ENCODE measurements at regions of chr2 and their contacts with region 1.

Region 1: DNA sequence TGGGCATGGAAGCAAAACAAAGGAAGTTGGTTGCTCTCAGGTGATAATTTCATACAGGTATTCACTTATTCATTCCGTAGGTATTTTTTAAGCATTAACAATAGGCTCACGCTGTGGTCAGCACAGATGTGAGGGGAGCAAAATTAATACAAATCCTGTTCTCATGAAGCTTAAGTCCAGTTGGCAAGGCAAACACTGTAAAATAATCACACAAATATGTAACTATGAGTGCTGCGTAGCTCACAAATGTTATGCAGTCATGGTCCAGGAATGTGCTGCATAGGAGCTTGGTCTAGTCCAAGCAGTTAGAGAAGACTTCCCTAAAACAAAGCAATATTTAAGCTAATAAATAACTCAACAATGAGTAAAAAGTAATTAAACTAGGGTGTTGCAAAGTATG is 23.9 kb downstream of the SP5 start:
- DNase-seq: no peak
- ATAC-seq: no peak
- H3K4me3 ChIP-seq: no peak overlapping the region
- H3K4me3 Mint-ChIP-seq: no peak overlapping the region
- H3K27ac ChIP-seq: no peak overlapping the region
- H3K27ac Mint-ChIP-seq: no peak overlapping the region
- H3K4me1 ChIP-seq: no peaks in the 10 kb centered on the region
- H3K4me1 Mint-ChIP-seq: no peaks in the 10 kb centered on the region
- H3K27me3 ChIP-seq: peaks cover 5 to 10% of the 10 kb centered on the region in 2 experiments
- H3K27me3 Mint-ChIP-seq: peaks cover 13% of the 10 kb centered on the region
- CTCF ChIP-seq: no peak

Region 2: DNA sequence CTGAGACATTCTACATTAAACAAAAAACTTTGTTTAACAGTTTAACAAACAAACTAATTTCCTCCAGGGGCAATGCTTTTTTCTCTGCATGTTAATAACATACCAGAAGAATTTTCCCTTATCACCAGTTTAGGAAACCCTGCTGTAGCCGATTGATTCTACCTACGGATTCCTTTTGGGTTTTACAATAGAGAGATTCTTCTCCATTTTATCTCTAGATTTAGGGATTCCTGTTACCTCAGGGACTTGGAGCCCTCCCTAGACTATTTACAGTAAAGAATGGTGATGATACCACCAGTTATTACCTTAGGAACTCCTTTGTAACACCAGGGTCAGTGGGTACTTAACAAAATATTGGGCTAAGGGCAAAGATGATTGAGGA is 25.8 kb after region 1 on chr2:
- CTCF ChIA-PET with region 1: no interaction called
- POLR2A ChIA-PET with region 1: no interaction called
- intact Hi-C with region 1: loop called in 1 of 2 experiments (anchors 1 kb)
- DNase-seq: no peak
- ATAC-seq: no peak
- H3K4me3 ChIP-seq: no peak overlapping the region
- H3K4me3 Mint-ChIP-seq: no peak overlapping the region
- H3K27ac ChIP-seq: no peak overlapping the region
- H3K27ac Mint-ChIP-seq: no peak overlapping the region
- H3K4me1 ChIP-seq: peaks cover under 1% of the 10 kb centered on the region
- H3K4me1 Mint-ChIP-seq: peaks cover 19% of the 10 kb centered on the region
- H3K27me3 ChIP-seq: peaks cover 0 to 2% of the 10 kb centered on the region in 2 experiments
- H3K27me3 Mint-ChIP-seq: no peaks in the 10 kb centered on the region
- CTCF ChIP-seq: no peak

Measured in CD4-positive, alpha-beta T cell (primary cell).